ENCODE measurements at regions of chr3 and their contacts with region 1.

Region 1: DNA sequence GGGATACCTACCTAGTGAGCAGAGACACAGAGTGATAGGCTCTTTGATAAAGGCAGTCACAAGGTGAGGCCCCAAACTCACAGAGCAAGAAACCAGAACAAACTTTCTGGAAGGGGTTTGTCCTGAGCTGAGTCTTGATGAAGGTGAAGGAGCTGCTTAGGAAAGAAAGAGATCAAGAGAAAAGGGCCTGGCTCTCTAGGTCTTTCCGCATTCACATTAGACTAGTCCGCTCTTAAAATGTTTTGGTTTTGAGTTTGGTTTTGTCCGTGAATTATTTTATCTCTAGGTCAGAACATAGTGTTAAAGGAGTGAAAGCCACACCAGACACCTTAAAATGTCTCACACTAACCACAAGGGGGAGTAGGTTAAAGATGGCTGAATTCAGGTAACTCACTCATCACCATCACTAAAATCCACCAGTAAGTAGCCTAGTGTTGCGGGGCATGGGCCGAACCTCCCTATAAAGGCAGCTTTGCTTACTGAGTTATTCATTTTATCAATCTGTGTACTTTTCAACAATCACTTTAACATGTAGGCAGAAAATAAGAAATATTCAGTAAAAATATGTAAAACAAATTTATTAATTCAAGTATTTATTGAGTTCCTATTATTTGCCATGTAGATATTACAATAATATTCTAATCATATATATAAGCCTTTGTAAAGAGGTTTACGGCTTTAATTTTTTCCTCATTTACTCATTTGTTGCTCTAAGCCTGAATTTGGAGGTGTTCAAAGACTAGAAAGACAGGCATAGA is 121.5 kb upstream of the TSC22D2 start:
- DNase-seq: peak; percentile 68
- H3K4me3 ChIP-seq: no peak overlapping the region
- H3K27ac ChIP-seq: no peak overlapping the region
- H3K4me1 ChIP-seq: no peaks in the 10 kb centered on the region
- H3K27me3 ChIP-seq: no peaks in the 10 kb centered on the region
- CTCF ChIP-seq: peak; percentile 41 to 55
- POLR2A ChIP-seq: no peak

Region 2: DNA sequence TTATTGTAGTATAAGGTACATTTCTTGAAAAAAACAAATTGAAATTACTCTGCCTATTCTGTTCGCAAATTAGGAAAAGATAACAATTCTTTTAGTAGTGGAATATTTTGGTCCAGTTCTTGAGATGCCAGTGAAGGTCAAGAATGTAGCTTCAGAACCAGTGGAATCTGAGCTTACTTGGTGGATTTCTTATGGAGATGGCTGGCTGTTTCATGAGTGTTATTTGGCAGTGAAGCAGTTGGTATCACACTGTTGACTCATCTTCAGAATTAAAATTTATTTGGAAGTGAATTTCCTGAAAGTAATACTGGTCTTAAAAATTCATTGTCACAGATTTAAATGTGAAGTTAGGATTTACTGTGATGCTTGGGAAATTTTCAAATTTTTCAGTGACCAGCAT is 454.5 kb before region 1 on chr3:
- CTCF ChIA-PET with region 1: no interaction called
- POLR2A ChIA-PET with region 1: no interaction called
- dilution Hi-C with region 1: no loop called
- intact Hi-C with region 1: no loop called
- DNase-seq: no peak
- H3K4me3 ChIP-seq: no peak overlapping the region
- H3K27ac ChIP-seq: no peak overlapping the region
- H3K4me1 ChIP-seq: no peaks in the 10 kb centered on the region
- H3K27me3 ChIP-seq: no peaks in the 10 kb centered on the region
- CTCF ChIP-seq: no peak
- POLR2A ChIP-seq: no peak

Region 3: DNA sequence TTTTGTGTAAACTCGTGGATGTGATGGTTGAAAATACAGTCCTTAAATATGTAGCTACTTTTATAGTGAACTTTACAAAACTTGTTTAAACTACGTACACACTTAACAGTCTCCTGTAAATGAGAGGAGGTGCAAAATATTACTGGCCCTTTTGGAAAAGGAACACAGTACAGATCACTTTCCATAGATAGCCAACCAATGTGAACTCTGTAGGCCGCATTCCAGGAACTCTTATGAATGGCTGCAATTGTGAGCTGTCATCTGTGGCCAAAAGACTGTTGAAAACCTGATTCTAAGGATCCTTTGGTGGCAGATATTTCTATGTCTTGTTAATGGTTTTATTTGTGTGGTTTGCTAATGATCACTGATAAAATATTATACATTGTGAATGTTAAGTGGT is 127.7 kb after region 1 on chr3:
- CTCF ChIA-PET with region 1: interaction called, 62 read pairs
- POLR2A ChIA-PET with region 1: interaction called, 3 read pairs
- dilution Hi-C with region 1: no loop called
- intact Hi-C with region 1: loop called (anchors 1 kb)
- DNase-seq: peak; percentile 59
- H3K4me3 ChIP-seq: peak overlapping the region; percentile 5 to 99 (median 6)
- H3K27ac ChIP-seq: no peak overlapping the region
- H3K4me1 ChIP-seq: peaks cover 51% of the 10 kb centered on the region
- H3K27me3 ChIP-seq: no peaks in the 10 kb centered on the region
- CTCF ChIP-seq: no peak
- POLR2A ChIP-seq: no peak

Measured in endothelial cell of umbilical vein (primary cell).